Endothelial cell of umbilical vein (primary cell): ENCODE measurements at regions of chr18 and their contacts with region 1.

Region 1: DNA sequence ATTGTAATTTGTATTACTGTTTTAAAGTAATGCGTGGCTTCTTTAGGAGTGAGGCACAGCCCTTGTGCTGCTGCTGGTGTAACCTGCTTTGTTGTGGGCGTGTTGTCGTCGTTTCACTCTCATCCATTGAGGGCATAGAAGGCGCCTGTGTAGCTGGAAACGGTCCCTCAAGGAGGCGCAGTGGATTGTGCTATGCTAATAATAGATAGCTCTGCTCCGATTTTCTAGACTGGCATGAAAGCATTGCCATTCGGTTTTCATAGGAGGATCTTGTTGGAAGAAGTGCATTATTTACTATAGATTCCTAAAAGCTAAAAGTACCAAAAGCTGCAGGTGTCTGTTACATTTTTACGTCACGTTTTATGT is 17.9 kb downstream of the RAB12 start:
- DNase-seq: no peak
- H3K4me3 ChIP-seq: no peak overlapping the region
- H3K27ac ChIP-seq: peak overlapping the region; percentile 10
- H3K4me1 ChIP-seq: peaks cover 12% of the 10 kb centered on the region
- H3K27me3 ChIP-seq: no peaks in the 10 kb centered on the region
- CTCF ChIP-seq: no peak
- POLR2A ChIP-seq: no peak

Region 2: GRCh38 chr18:8615397-8616027 is 11.6 kb before region 1 on chr18:
- CTCF ChIA-PET with region 1: interaction called, 14 read pairs
- POLR2A ChIA-PET with region 1: no interaction called
- dilution Hi-C with region 1: no loop called
- intact Hi-C with region 1: no loop called
- DNase-seq: peak; percentile 34
- H3K4me3 ChIP-seq: no peak overlapping the region
- H3K27ac ChIP-seq: no peak overlapping the region
- H3K4me1 ChIP-seq: peaks cover 11% of the 10 kb centered on the region
- H3K27me3 ChIP-seq: no peaks in the 10 kb centered on the region
- CTCF ChIP-seq: no peak
- POLR2A ChIP-seq: no peak

Region 3: DNA sequence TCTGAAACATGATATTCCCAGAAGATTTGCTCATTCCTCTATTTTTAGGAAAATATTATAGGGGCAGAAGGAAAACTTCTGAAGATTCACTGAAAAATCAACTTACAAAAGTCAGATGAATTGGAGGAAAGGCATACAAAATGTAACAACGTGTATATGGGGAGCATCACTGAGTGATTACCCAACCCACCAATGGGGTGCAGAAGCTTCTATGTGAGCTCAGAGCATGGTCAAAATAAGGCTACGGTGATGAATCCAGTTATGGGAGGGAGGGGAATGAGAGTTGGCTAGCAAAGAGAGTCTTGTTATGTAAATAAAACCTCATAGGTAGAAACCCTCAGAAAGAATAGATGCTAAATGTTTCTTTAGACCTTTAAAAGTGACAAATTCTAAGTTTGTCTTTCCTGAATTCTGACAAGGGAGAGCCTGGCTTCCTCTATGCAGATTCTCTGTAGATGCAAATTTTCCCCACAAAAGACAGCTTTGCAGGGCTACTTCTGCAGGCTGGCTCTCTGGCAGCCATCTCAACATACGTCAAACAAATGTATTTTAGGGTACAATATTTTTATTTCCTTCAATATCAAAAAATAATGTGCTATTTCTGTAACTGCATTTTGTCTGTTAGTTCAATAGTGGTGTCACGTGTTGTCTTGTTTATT is 304.0 kb after region 1 on chr18:
- CTCF ChIA-PET with region 1: no interaction called
- POLR2A ChIA-PET with region 1: no interaction called
- dilution Hi-C with region 1: no loop called
- intact Hi-C with region 1: no loop called
- DNase-seq: no peak
- H3K4me3 ChIP-seq: no peak overlapping the region
- H3K27ac ChIP-seq: no peak overlapping the region
- H3K4me1 ChIP-seq: no peaks in the 10 kb centered on the region
- H3K27me3 ChIP-seq: peaks cover 0 to 2% of the 10 kb centered on the region in 2 experiments
- CTCF ChIP-seq: no peak
- POLR2A ChIP-seq: no peak